Aorta (tissue), 5 donors: ENCODE measurements at regions of chr3 and their contacts with region 1.

Region 1: GRCh38 chr3:49673715-49674496 is at the start of gene APEH:
- DNase-seq: peak; percentile 98
- ATAC-seq: peak; percentile 97
- H3K4me3 ChIP-seq: peak within 1 kb of the TSS; percentile 29 to 85
- H3K27ac ChIP-seq: peak within 1 kb of the TSS in 1 of 2 donors; percentile 48
- H3K4me1 ChIP-seq: no peaks in the 10 kb centered on the region
- H3K27me3 ChIP-seq: no peaks in the 10 kb centered on the region
- total RNA-seq, gene APEH: 51.7 to 53.6 TPM

Region 2: GRCh38 chr3:49539659-49540560 is 134.0 kb before region 1 on chr3:
- intact Hi-C with region 1: loop called (anchors 1 kb)
- DNase-seq: peak; percentile 97 to 98
- ATAC-seq: peak; percentile 99
- H3K4me3 ChIP-seq: peak overlapping the region; percentile 1 to 25
- H3K27ac ChIP-seq: peak overlapping the region in 1 of 2 donors; percentile 47
- H3K4me1 ChIP-seq: no peaks in the 10 kb centered on the region
- H3K27me3 ChIP-seq: no peaks in the 10 kb centered on the region

Region 3: GRCh38 chr3:49553692-49554632 is 119.9 kb before region 1 on chr3 and contains the start of gene BSN:
- intact Hi-C with region 1: loop called (anchors 5 kb)
- DNase-seq: peak; percentile 94 to 97
- ATAC-seq: peak; percentile 97
- H3K4me3 ChIP-seq: peak within 1 kb of the TSS; percentile 9 to 60
- H3K27ac ChIP-seq: no peak within 1 kb of the TSS
- H3K4me1 ChIP-seq: peaks cover 0 to 3% of the 10 kb centered on the region in 2 donors
- H3K27me3 ChIP-seq: no peaks in the 10 kb centered on the region
- total RNA-seq, gene BSN: 0.42 to 0.75 TPM

Region 4: GRCh38 chr3:49616491-49616941 is 57.4 kb before region 1 on chr3:
- intact Hi-C with region 1: no loop called
- DNase-seq: no peak
- ATAC-seq: no peak
- H3K4me3 ChIP-seq: no peak overlapping the region
- H3K27ac ChIP-seq: no peak overlapping the region
- H3K4me1 ChIP-seq: no peaks in the 10 kb centered on the region
- H3K27me3 ChIP-seq: no peaks in the 10 kb centered on the region